AG04449 (cell line): ENCODE measurements at regions of chr20 and their contacts with region 1.

Region 1: GRCh38 chr20:2984956-2985661 is 58.3 kb upstream of the GNRH2 start:
- DNase-seq: peak; percentile 26
- H3K4me3 ChIP-seq: no peak overlapping the region
- CTCF ChIP-seq: no peak

Region 2: DNA sequence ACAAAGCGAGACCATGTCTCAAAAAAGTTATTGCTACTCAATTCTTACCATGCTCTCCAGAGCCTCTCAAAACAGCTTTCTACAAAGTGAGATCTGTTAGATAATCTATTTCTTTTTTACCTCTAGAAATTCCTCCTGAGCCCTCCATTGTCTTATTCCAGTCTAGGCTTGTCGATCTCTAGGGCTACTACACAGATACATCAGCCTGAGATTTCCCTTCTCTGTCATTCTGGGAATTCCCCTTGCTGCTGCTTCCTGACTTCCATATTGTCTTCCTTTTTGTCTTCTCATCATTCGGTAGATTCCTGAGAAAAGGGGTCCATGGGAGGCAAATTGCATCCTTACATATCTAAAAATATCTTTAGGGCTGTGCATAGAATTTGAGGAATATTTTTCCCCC is 17.3 kb before region 1 on chr20:
- CTCF ChIA-PET with region 1: no interaction called
- POLR2A ChIA-PET with region 1: no interaction called
- DNase-seq: no peak
- H3K4me3 ChIP-seq: no peak overlapping the region
- CTCF ChIP-seq: no peak

Region 3: DNA sequence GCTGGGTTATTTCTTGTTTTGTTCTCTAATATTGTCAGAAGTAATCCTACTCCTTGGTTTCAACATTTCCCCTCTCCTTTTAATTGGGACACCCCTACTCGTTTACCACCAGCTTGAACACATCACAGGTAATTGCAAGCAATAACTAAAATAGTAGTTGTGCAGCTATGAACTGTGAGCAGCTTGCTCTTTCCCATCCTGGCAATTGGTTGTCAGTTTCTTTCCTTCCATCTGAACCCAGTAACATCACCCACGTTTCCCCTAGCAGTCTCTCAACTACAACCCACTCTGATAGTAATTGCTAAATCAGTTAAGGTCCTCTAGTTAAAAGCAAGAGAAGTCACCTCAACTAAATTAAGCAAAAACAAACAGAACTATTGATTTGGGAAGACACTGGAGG is 10.7 kb after region 1 on chr20:
- CTCF ChIA-PET with region 1: interaction called, 10 read pairs
- POLR2A ChIA-PET with region 1: no interaction called
- DNase-seq: no peak
- H3K4me3 ChIP-seq: no peak overlapping the region
- CTCF ChIP-seq: no peak

Region 4: GRCh38 chr20:3045816-3046676 is 60.9 kb after region 1 on chr20 and contains the start of gene MRPS26:
- CTCF ChIA-PET with region 1: no interaction called
- POLR2A ChIA-PET with region 1: no interaction called
- DNase-seq: peak; percentile 14
- H3K4me3 ChIP-seq: peak within 1 kb of the TSS; percentile 75
- CTCF ChIP-seq: no peak

Region 5: DNA sequence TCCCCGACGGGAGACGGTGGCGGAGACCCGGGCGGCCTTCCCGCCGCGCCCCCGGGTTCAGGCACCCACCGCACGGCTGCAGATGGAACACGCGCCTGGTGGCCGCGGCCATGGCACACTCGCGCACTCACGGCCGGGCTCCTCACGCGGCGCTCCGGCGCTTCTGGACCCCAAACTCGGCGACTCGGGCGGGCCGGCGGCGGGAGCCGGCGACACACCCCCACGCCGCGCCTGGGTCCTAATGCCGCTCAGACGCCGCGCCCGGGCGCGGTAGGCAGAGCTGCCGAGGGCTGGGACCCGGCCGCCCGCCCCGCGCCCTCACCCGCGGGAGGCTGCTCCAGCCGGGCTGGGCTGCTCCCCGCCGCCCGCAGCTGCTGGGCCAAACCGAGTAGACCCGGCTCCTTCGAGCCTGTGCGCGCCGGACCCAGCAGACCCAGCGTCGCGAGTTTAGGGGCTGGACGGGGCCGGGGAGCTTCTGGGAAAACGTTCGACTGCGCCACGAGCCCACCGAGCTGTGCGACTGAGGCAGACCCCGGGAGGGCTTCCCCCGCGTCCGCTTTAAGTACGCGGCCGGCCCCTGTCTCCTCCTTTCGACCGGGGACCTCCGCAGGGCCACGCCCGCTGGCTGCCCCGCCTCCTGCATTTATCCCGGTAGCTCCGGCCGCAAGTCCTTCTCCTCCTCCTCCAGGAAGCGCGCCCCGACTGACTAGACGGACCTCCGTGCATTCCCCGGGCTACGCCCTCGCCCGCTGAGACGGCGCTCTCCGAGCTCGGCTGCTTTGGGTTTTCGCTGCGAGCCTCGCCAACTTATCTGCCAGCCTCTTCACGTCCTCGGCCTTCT is 254.1 kb after region 1 on chr20 and contains the start of gene SLC4A11:
- CTCF ChIA-PET with region 1: no interaction called
- POLR2A ChIA-PET with region 1: no interaction called
- DNase-seq: no peak
- H3K4me3 ChIP-seq: peak within 1 kb of the TSS; percentile 55
- CTCF ChIP-seq: no peak